SK-N-SH (cell line): ENCODE measurements at regions of chr12 and their contacts with region 1.

Region 1: DNA sequence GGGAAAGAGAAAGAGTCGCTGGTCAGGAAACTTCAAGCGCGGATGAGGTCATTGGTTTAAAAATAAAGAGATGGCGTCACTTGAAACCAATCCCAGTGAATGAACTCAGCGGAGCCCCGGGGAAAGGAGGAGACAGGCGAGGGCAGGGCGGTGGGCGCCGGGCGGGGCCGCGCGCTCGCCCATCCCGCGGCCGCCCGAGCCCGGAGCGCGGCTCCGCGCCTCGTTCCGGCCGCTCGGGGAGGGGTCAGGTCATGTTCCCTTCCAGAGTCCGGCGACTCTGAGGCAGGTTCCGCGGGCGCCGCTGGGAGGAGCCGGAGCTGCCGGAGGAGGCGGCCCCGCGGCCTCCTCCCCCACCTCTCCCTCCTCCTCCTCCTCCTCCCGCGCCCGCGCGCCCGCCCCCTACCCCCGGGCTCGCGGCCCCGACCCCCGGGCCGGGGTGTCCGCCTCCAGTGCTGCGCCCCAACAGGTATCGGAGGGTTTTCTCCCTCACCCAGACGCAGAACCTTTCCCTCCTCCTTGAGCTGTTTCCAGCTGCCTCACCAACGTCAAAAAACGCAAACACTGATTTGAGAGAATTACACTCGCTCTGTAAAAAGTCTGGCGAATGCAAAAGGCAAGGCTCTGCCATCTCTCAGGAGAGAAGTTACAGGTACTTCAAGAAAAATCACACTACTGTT is at the start of gene DUSP16:
- DNase-seq: peak; percentile 95
- H3K4me3 ChIP-seq: peak within 1 kb of the TSS; percentile 75 to 93
- H3K27ac ChIP-seq: peak within 1 kb of the TSS; percentile 94 to 96
- H3K4me1 ChIP-seq: peaks cover 8 to 17% of the 10 kb centered on the region in 2 experiments; a peak in 3 of 4 replicates
- H3K27me3 ChIP-seq: no peaks in the 10 kb centered on the region
- CTCF ChIP-seq: no peak; the same call in 1 of the 2 replicates
- EP300 ChIP-seq: 0 out of 4 replicates have a peak, but pooled peaks of 1 of the 2 experiments have one; percentile 4
- RAD21 ChIP-seq: no peak
- polyA plus RNA-seq, gene DUSP16: 7.1 and 8.5 TPM in 2 replicates

Region 2: DNA sequence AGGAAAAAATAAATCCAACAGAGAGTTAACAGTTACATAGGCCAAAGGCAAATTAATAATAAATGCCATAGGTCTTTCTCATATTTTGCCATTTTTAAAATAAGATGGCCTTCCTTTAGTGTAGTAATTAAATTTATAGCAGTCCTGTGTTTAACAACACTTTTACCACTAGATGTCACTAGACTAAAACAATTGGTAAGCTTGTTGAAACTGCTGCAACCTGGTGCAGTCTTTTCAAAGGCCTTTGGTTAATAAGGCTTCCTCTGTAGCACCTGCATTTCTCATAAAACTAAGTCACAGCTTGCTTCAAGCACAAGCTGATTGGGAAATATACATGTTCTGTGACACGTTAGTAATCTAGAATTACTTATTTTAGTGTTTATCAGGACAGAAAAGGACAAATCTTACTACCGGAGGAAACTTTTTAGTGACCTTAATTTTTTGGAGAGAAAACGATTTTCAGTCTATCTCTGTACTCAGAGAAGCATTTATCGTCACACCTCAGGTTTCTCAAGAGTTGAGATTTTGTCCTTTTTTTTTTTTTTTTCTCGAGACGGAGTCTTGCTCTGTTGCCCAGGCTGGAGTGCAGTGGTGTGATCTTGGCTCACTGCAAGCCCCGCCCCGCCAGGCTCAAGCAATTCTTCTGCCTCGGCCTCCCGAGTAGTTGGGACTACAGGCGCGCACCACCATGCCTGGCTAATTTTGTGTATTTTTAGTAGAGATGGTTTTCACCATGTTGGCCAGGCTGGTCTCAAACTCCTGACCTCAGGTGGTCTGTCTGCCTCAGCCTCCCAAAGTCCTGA is 185.9 kb before region 1 on chr12:
- CTCF ChIA-PET with region 1: interaction called, 28 read pairs
- POLR2A ChIA-PET with region 1: no interaction called
- DNase-seq: peak; percentile 66
- H3K4me3 ChIP-seq: no peak overlapping the region; a peak in 1 of 4 replicates
- H3K27ac ChIP-seq: no peak overlapping the region
- H3K4me1 ChIP-seq: peaks cover 0 to 7% of the 10 kb centered on the region in 2 experiments; a peak in 1 of 4 replicates
- H3K27me3 ChIP-seq: no peaks in the 10 kb centered on the region
- CTCF ChIP-seq: peak; percentile 84
- EP300 ChIP-seq: no peak
- RAD21 ChIP-seq: peak; percentile 100

Region 3: DNA sequence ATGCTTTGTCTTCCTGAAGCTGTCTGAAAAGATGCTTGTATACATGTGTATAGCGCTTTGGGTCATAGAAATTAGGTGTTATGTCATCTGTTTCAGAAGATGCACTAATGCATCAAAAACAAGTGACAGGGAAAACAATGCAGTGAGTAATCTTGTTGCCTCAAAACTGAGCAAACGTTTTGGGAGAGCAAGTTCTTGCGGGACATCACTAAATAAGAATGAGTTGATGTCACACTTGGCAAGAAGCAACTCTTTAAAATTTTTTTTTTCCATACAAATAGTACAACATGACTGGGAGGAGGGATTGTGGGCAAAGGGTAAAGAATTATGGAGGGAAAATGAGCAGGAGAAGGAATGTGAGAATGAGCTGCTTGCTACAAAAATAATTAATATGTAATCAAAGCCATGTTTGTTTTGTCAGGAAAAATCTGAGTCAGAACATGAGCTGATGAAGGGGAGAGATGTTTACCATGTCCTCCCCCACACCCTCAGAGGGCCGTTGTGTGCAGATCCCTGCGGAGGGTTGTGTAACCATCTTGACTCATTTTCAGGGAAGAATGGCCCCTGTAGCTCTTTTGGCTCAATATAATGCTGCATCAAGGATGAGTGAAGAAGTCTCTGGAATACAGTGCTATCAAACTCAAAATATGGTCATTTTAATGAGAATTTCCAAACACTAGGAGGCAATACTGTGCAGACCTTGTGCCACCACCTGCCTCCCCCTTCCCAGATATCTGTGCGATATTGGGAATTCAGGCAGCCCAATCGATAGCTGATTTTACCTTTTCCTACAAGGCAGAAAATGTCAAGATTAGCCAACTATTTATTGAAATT is 164.5 kb before region 1 on chr12:
- CTCF ChIA-PET with region 1: interaction called, 13 read pairs
- POLR2A ChIA-PET with region 1: no interaction called
- DNase-seq: no peak
- H3K4me3 ChIP-seq: peak overlapping the region in 1 of 2 experiments; percentile 25; a peak in 1 of 4 replicates
- H3K27ac ChIP-seq: peak overlapping the region in 1 of 2 experiments; percentile 65; a peak in 2 of 4 replicates
- H3K4me1 ChIP-seq: peaks cover 4 to 15% of the 10 kb centered on the region in 2 experiments; a peak in 2 of 4 replicates
- H3K27me3 ChIP-seq: no peaks in the 10 kb centered on the region
- CTCF ChIP-seq: peak; percentile 39
- EP300 ChIP-seq: peak in 1 of 2 experiments; percentile 58; a peak in 1 of 4 replicates
- RAD21 ChIP-seq: peak; percentile 49

Region 4: GRCh38 chr12:12505544-12506495 is 56.9 kb before region 1 on chr12:
- CTCF ChIA-PET with region 1: interaction called, 14 read pairs
- POLR2A ChIA-PET with region 1: interaction called, 3 read pairs
- DNase-seq: peak; percentile 77
- H3K4me3 ChIP-seq: peak overlapping the region; percentile 27 to 51; a peak in 3 of 4 replicates
- H3K27ac ChIP-seq: peak overlapping the region; percentile 98 to 100
- H3K4me1 ChIP-seq: peaks cover 42 to 46% of the 10 kb centered on the region in 2 experiments
- H3K27me3 ChIP-seq: no peaks in the 10 kb centered on the region
- CTCF ChIP-seq: no peak
- EP300 ChIP-seq: peak; percentile 92 to 96
- RAD21 ChIP-seq: peak; percentile 53

Region 5: GRCh38 chr12:12518919-12519318 is 43.8 kb before region 1 on chr12:
- CTCF ChIA-PET with region 1: interaction called, 13 read pairs
- POLR2A ChIA-PET with region 1: no interaction called
- DNase-seq: no peak
- H3K4me3 ChIP-seq: no peak overlapping the region
- H3K27ac ChIP-seq: peak overlapping the region in 1 of 2 experiments; percentile 58; a peak in 3 of 4 replicates
- H3K4me1 ChIP-seq: peaks cover 13 to 15% of the 10 kb centered on the region in 2 experiments
- H3K27me3 ChIP-seq: no peaks in the 10 kb centered on the region
- CTCF ChIP-seq: no peak
- EP300 ChIP-seq: no peak
- RAD21 ChIP-seq: no peak